ENCODE measurements at regions of chr15 and their contacts with region 1.

Region 1: GRCh38 chr15:75606711-75607699 is 18.5 kb downstream of the SNUPN start:
- DNase-seq: peak; percentile 74
- ATAC-seq: peak; percentile 80
- H3K4me3 Mint-ChIP-seq: peak overlapping the region; percentile 63
- H3K27ac Mint-ChIP-seq: peak overlapping the region; percentile 96
- H3K4me1 Mint-ChIP-seq: peaks cover 50% of the 10 kb centered on the region
- H3K27me3 Mint-ChIP-seq: no peaks in the 10 kb centered on the region

Region 2: GRCh38 chr15:75551081-75551480 is 55.9 kb before region 1 on chr15:
- CTCF ChIA-PET with region 1: no interaction called
- POLR2A ChIA-PET with region 1: no interaction called
- DNase-seq: no peak
- ATAC-seq: no peak
- H3K4me3 Mint-ChIP-seq: no peak overlapping the region
- H3K27ac Mint-ChIP-seq: no peak overlapping the region
- H3K4me1 Mint-ChIP-seq: no peaks in the 10 kb centered on the region
- H3K27me3 Mint-ChIP-seq: no peaks in the 10 kb centered on the region

Region 3: DNA sequence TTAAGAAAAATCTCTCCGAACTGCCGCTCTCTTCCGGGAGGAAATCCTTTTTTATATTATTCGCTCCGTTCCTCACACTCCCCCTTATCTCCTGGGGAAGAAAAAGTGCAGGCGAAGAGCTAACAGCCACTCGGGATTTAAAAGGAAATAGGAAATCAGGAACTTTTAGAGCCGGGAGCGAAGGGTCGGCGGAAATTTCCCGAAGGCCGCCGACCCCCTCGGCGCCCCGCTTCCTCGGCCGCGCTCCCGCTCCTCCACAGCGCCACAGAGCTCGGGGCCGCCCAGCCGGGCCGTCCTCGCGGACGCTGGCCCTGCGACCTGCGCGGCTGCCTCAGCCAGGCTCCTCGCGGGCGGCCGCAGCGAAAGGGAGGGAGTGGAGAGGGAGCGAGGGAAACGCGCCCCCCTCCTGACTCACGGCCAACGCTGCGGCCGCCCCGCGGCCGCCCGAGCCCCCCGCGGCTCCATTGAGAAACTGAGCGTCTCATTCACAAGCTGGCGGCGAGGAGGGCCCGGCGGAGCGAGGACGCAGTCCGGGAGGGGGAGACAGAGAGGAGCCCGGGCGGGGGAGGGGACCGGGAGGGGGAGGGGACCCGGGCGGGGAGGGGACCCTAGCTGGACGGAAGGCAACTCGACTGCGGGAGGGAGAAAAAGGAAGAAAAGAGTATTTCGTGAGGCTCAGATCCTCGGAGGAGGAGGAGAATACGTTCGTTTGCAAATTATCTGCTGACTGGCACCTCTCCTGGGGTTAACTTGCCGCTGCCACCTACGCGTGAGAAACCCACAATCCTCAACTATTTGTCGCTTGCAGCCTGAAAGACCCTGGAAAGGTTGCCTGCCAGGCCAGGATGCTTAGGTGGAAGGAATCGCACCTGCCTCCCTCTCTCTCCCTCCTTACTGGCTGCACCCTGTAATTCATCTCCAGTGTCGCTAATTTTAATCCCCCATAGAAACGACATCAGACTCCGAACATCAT is 27.8 kb before region 1 on chr15 and contains the start of gene PTPN9:
- CTCF ChIA-PET with region 1: interaction called, 5 read pairs
- POLR2A ChIA-PET with region 1: interaction called, 13 read pairs
- DNase-seq: peak; percentile 84
- ATAC-seq: peak; percentile 83
- H3K4me3 Mint-ChIP-seq: peak within 1 kb of the TSS; percentile 92
- H3K27ac Mint-ChIP-seq: peak within 1 kb of the TSS; percentile 94
- H3K4me1 Mint-ChIP-seq: peaks cover 18% of the 10 kb centered on the region
- H3K27me3 Mint-ChIP-seq: no peaks in the 10 kb centered on the region
- total RNA-seq, gene PTPN9: 46.3 to 48.7 TPM

Measured in activated CD8-positive, alpha-beta T cell treated with anti-CD3 and anti-CD28 coated beads, Interleukin-2, amount 10 ng/mL, durations not matched to agents 7 days and 5 days (primary cell).